Transverse colon (tissue), 4 donors: ENCODE measurements at regions of chr1 and their contacts with region 1.

Region 1: DNA sequence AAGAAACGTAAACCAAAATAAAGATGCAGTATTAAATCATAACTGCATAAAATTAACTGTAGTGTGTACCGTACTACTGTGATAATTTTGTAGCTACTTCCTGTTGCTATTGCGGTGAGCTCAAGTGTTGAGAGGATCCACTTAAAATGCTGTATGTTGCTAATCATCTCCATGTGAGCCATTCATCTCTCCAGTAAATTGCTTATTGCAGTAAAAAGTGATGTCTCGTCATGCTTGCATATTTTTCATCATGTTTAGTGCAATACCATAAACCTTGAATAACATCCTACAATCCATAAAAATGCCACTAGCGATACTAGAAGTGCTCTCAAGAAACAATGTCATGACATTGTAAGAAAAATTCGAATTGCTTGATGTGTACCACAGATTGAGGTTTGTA is 66.3 kb downstream of the RAVER2 start:
- DNase-seq: no peak
- H3K4me3 ChIP-seq: no peak overlapping the region
- H3K27ac ChIP-seq: no peak overlapping the region
- H3K4me1 ChIP-seq: no peaks in the 10 kb centered on the region
- H3K27me3 ChIP-seq: no peaks in the 10 kb centered on the region
- CTCF ChIP-seq: no peak
- EP300 ChIP-seq: no peak
- POLR2A ChIP-seq: no peak

Region 2: DNA sequence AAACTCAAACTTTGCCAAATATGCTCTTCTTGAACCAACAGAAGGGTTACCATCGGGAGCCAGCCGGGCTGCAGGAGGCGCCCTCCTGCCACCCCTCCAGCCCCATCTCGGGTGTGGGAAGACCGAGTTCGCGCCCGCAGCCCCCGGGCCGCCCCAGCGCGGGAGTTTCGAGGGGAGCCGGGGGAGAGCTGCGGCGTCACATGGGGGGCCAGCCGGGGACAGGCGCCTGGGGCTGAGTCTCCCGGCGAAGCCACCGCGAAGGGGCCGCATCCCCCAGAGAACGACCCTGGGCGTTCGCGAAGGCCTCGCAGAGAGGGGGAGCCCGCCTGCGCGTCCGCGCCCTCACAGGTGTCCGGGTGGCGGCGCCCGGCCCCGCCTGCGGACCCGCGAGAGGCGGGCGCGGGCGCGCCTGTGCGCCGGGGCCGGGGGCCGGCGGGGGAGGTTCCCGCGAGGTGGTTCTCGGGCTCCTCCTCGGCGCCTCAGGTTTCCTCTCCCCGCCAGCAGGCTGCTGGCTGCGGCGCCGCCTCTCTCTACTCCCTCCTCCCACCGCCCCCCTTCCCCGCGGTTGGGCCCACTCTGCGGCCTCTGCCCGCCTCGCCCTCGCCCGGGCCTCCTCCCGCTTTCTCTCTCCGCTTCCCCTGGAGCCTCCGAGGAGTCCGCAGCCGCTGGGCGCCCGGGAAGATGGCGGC is 66.5 kb before region 1 on chr1 and contains the start of gene RAVER2:
- in situ Hi-C with region 1: loop called in 1 of 4 experiments (anchors 10 kb)
- intact Hi-C with region 1: no loop called
- DNase-seq: peak; percentile 86
- H3K4me3 ChIP-seq: peak within 1 kb of the TSS; percentile 81 to 98 (median 84)
- H3K27ac ChIP-seq: peak within 1 kb of the TSS; percentile 89 to 95 (median 94)
- H3K4me1 ChIP-seq: peaks cover 0 to 40% (median 13%) of the 10 kb centered on the region in 4 donors
- H3K27me3 ChIP-seq: no peaks in the 10 kb centered on the region
- CTCF ChIP-seq: peak; percentile 48 to 63 (median 54)
- EP300 ChIP-seq: no peak
- POLR2A ChIP-seq: peak; percentile 50
- total RNA-seq, gene RAVER2: 46.8 to 94.5 (median 71.0) TPM